ENCODE measurements at regions of chr18 and their contacts with region 1.

Region 1: DNA sequence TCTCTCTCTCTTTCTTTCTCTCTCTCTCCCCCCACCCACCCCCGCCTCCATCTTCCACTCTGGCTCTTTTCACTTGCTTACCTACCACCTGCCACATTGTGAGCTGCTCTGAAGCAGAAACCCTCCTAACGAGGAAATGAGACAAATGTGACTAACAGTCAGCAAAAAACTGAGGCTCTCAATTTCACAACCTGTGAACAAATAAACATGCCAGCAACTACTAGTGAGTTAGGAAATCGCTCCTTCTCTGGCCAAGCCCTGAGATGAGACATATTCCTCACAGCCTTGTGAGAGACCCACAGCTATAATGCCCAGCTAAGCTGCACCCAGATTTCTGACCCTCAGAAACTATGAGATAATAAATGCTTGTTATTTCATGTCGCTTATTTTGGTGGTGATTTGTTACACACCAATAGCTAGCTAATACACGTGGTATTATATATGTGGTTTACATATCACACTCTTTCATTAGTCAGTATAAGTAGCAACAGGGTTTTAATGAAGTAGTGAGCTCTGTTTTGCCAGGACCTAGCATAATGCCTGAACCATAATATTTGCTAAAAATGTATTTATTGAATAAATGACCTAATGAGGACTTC is 8.4 kb upstream of the ZNF521 start:
- DNase-seq: no peak
- H3K4me3 ChIP-seq: no peak overlapping the region
- H3K27ac ChIP-seq: no peak overlapping the region
- H3K4me1 ChIP-seq: no peaks in the 10 kb centered on the region
- CTCF ChIP-seq: no peak

Region 2: DNA sequence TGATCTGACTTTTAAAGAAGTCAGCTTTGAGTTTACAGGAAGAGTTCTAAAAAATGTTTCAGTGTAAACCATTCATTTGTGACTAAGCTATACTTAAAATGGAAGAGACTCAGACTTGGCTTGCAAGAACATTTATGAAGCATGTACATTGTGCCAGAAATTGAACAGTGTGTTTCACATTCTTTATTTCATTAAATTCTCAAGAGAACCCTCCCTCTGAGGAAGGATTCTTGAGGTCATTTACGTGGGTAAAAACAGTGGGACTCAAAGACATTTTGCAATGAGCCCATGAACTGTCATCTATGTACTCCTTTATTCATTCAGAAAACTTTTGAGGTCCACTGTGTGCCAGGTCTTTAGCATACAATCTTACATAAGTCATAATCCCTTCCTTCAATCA is 135.2 kb after region 1 on chr18:
- CTCF ChIA-PET with region 1: no interaction called
- POLR2A ChIA-PET with region 1: no interaction called
- intact Hi-C with region 1: loop called (anchors 10 kb)
- DNase-seq: no peak
- H3K4me3 ChIP-seq: no peak overlapping the region
- H3K27ac ChIP-seq: no peak overlapping the region
- H3K4me1 ChIP-seq: no peaks in the 10 kb centered on the region
- CTCF ChIP-seq: no peak

Measured in OCI-LY7 (cell line).